ENCODE measurements at regions of chr13 and their contacts with region 1.

Region 1: GRCh38 chr13:79423801-79424642 is 18.0 kb upstream of the RBM26 start:
- DNase-seq: peak; percentile 29
- H3K4me3 Mint-ChIP-seq: no peak overlapping the region
- H3K27ac Mint-ChIP-seq: no peak overlapping the region
- H3K4me1 Mint-ChIP-seq: peaks cover 2% of the 10 kb centered on the region
- H3K27me3 Mint-ChIP-seq: no peaks in the 10 kb centered on the region

Region 2: DNA sequence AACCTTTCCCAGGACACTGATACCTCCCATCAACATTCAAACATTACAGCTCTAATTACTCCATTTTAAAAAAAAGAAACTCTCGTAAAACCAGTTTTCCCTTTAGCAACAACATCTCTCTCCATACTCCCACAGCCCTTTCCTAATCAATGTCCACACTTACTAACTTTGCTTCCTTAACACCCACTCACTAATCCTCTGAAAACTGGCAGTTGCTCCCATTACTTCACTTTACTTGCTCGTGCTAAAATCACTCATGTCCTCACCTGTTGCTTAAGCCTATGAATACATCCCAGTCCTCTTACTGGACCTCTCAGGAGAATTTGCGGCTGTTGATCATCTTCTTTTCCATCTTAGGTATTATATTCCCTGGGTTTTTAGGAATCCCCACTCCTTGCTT is 62.7 kb before region 1 on chr13:
- CTCF ChIA-PET with region 1: no interaction called
- POLR2A ChIA-PET with region 1: no interaction called
- DNase-seq: no peak
- H3K4me3 Mint-ChIP-seq: no peak overlapping the region
- H3K27ac Mint-ChIP-seq: no peak overlapping the region
- H3K4me1 Mint-ChIP-seq: peaks cover 4% of the 10 kb centered on the region
- H3K27me3 Mint-ChIP-seq: no peaks in the 10 kb centered on the region

Region 3: DNA sequence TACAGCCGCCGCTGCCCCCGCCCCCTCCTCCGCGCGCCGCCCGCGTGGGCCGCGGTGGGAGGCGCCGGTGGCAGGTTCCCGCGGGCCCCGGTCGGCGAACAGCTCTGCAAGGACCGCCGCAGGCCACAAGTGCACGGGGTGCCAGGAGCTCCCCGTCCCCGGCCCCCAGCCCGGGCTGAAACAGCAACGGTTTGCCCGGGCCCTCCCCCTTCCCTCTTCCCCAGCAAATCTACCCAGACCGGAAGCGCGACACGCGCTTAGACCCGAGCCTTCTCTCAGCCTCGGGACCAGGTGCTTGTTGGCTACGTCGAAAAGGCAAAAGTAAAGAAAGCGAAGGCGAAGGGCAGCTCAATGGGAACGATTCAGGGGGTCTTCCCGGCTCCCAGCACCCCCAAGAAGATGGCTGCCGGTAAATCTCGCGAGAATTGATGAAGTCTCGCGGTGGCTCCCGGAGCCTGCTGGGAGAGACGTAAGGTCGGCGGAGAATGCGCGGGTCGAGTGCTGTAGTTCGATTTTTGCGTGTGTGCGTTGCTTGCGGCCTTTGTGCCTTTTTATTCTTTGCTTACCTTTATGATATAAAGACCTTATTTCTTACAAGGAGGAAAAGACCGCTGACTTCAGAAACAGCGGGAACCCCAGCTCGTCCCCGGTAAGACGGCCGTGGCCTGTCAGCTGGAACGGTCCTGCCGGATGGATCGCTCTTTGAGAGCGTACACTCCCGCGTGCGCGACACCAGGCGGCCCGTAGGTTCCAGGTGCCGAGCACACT is 18.0 kb before region 1 on chr13 and contains the start of gene RBM26:
- CTCF ChIA-PET with region 1: interaction called, 15 read pairs
- POLR2A ChIA-PET with region 1: no interaction called
- DNase-seq: peak; percentile 96
- H3K4me3 Mint-ChIP-seq: peak within 1 kb of the TSS; percentile 93
- H3K27ac Mint-ChIP-seq: peak within 1 kb of the TSS; percentile 97
- H3K4me1 Mint-ChIP-seq: peaks cover 34% of the 10 kb centered on the region
- H3K27me3 Mint-ChIP-seq: no peaks in the 10 kb centered on the region
- total RNA-seq, gene RBM26: 55.8 to 69.5 TPM

Region 4: GRCh38 chr13:79413521-79413920 is 10.5 kb before region 1 on chr13:
- CTCF ChIA-PET with region 1: interaction called, 11 read pairs
- POLR2A ChIA-PET with region 1: no interaction called
- DNase-seq: no peak
- H3K4me3 Mint-ChIP-seq: no peak overlapping the region
- H3K27ac Mint-ChIP-seq: no peak overlapping the region
- H3K4me1 Mint-ChIP-seq: peaks cover 7% of the 10 kb centered on the region
- H3K27me3 Mint-ChIP-seq: no peaks in the 10 kb centered on the region

Region 5: DNA sequence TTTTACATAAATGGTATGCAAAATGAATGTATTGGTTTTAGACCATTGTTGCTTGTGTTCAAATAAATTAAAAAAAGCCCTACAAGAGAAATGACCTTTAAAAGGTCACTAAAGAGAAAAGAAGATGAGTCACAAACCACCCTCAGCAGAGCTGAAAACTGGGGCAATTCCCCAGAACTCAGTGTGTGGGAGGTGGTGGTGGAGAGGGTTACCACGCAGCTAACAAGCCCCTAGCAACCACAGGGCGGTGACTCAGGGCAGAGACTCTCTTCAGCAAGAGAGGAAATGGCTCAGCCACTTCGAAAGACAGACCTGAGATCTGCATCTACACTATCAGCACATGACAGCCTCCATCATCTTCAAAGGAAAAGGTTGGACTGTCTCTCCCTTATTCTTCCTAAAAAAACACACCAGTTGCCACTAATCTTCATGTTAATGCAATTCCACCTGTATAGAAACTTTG is 27.5 kb after region 1 on chr13:
- CTCF ChIA-PET with region 1: interaction called, 10 read pairs
- POLR2A ChIA-PET with region 1: no interaction called
- DNase-seq: peak; percentile 84
- H3K4me3 Mint-ChIP-seq: peak overlapping the region; percentile 35
- H3K27ac Mint-ChIP-seq: peak overlapping the region; percentile 79
- H3K4me1 Mint-ChIP-seq: peaks cover 60% of the 10 kb centered on the region
- H3K27me3 Mint-ChIP-seq: no peaks in the 10 kb centered on the region

Region 6: DNA sequence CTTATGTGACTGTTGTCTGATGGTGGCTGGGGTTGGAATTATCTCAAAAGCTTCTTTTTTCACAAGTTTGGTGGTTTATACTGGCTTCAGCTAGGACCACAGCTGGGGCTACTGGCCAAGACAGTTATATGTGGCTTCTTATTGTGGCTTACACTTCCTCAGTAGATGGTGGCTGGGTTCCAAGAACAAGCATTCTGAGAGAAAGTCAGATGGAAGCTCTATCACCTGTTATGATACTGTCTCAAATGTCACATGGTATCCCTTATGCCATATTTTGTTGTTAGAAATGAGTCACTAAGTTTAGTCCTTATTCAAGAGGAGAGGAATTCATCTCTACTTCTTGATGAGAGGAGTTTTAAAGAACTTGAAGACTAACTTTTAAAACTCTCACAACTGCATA is 98.6 kb after region 1 on chr13:
- CTCF ChIA-PET with region 1: interaction called, 10 read pairs
- POLR2A ChIA-PET with region 1: no interaction called
- DNase-seq: peak; percentile 58
- H3K4me3 Mint-ChIP-seq: peak overlapping the region; percentile 49
- H3K27ac Mint-ChIP-seq: peak overlapping the region; percentile 81
- H3K4me1 Mint-ChIP-seq: peaks cover 30% of the 10 kb centered on the region
- H3K27me3 Mint-ChIP-seq: no peaks in the 10 kb centered on the region

Region 7: DNA sequence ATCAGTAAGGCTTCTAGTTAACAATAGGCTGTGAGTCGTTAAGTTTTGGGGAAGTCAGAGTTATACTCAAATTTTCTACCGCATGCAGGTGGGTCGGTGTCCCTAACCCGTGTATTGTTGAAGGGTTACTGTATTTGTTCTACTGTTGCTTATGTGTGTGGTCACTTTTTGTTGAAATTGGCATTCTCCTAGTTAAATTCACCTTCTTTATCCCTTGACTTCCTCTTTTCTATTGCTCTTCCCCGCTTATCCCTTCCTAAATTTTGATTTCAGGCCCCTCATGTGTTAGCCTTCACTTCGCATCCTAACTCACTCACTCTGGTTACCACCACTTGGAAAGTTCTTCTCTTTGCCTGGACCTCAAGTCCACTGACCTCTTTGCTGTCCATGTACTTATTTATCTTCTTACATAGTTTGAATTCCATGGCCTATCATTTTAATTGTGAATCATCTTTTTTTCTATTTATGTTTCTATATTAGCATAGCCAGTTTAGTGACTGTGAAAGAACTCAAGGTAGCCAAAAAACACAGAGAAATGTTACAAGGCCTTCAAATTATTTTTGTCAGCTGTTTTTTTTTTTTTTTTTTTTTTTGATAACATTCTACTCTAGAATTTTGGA is 109.9 kb after region 1 on chr13:
- CTCF ChIA-PET with region 1: interaction called, 38 read pairs
- POLR2A ChIA-PET with region 1: no interaction called
- DNase-seq: no peak
- H3K4me3 Mint-ChIP-seq: no peak overlapping the region
- H3K27ac Mint-ChIP-seq: no peak overlapping the region
- H3K4me1 Mint-ChIP-seq: peaks cover 41% of the 10 kb centered on the region
- H3K27me3 Mint-ChIP-seq: no peaks in the 10 kb centered on the region

Region 8: DNA sequence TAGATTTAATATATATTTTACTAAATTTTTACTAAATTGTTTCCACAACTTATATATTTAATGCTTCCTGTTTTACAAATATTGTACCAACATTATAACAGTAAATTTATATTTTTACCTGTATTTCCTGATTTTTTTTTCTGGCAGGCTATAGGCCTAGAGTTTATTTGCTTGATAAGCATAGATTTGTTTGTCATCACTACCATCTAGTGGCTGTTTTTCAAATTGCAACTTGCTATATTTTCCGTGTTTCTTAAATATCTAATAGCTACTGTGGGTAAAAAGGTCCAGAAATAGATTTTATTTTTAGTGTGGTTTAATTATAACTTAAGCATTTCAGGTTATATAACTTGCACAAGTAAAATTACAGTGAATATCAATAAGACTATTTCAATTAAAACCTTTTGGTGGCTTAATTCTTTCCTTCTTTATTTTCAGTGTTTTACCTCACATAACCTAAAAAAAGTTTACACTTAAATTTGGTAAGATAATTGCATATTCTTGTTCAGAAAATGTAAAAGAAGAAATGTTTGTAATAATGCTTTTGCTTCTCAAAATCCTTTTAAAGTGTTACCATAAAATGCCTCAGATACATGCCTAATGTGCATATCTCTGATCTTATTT is 117.5 kb after region 1 on chr13:
- CTCF ChIA-PET with region 1: interaction called, 38 read pairs
- POLR2A ChIA-PET with region 1: interaction called, 6 read pairs
- DNase-seq: peak; percentile 57
- H3K4me3 Mint-ChIP-seq: no peak overlapping the region
- H3K27ac Mint-ChIP-seq: no peak overlapping the region
- H3K4me1 Mint-ChIP-seq: peaks cover 2% of the 10 kb centered on the region
- H3K27me3 Mint-ChIP-seq: no peaks in the 10 kb centered on the region

Measured in activated CD4-positive, alpha-beta T cell treated with anti-CD3 and anti-CD28 coated beads, Interleukin-2, amount 10 ng/mL, durations not matched to agents 7 days and 5 days (primary cell).